Left cardiac atrium (tissue), 4 donors: ENCODE measurements at regions of chr14 and their contacts with region 1.

Region 1: DNA sequence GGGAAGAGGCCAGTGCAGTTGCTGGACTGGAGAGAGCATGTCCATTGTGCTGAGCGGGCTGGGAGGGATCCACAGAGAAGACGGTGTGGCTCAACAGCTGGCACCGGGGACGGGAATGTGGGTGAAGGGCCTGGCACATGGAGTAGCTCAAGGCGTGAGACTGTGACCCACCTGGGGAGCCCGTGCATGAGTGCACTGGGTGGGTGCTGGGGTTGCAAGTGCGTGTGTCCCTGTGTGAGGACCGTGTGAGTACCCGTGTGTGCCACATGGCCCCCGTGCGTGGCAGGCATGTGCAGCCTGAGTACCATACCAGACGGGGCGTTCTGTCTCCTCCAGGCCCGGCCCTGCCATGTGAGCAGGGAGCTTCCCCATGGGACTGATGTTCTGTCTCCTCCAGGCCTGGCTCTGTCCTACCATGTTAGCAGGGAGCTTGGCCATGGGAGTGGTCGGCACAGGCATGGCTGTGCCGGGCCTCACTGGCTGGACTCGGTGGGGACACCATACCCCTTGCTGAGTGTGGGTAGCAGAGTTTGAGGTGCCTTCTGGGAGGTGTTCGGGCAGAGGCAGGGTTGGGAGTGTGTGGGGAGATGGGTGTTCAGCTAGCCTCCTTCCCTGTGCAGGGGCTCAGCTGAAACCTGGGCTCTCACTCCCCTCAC is 234.4 kb downstream of the TMEM121 start:
- DNase-seq: no peak
- ATAC-seq: peak; percentile 8 to 37

Region 2: DNA sequence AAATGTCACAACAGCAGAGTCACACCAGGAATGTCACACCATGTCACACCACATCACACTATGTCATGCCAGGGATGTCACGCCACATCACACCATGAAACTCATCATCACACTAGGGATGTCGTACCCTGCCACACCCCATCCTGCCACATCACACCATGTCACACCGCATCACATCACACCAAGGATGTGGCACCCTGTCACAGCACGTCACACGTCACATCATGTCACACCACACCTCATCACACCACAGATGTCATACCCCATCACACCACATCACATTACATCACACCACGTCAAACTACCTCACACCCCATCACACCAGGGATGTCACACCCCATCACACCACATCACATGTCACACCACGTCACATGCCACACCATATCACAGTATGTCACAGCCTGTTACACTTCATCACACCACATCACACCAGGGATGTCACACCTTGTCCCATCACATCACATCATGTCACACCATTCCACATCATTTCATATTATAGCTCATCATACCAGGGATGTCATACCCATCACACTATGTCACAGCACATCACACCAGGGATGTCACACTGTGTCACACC is 143.5 kb before region 1 on chr14:
- intact Hi-C with region 1: loop called in 1 of 2 experiments (anchors 2 kb)
- DNase-seq: no peak
- ATAC-seq: peak; percentile 6 to 18

Region 3: GRCh38 chr14:106013879-106014376 is 253.1 kb after region 1 on chr14:
- intact Hi-C with region 1: no loop called
- DNase-seq: no peak
- ATAC-seq: no peak

Region 4: GRCh38 chr14:106120101-106120500 is 359.3 kb after region 1 on chr14:
- intact Hi-C with region 1: no loop called
- DNase-seq: no peak
- ATAC-seq: no peak